Dendritic cell treated with granulocyte-macrophage colony-stimulating factor and Interleukin-4, amounts not matched to agents 40 ng/mL and 50 ng/mL, for 4 days (primary cell): ENCODE measurements at regions of chr1 and their contacts with region 1.

Region 1: DNA sequence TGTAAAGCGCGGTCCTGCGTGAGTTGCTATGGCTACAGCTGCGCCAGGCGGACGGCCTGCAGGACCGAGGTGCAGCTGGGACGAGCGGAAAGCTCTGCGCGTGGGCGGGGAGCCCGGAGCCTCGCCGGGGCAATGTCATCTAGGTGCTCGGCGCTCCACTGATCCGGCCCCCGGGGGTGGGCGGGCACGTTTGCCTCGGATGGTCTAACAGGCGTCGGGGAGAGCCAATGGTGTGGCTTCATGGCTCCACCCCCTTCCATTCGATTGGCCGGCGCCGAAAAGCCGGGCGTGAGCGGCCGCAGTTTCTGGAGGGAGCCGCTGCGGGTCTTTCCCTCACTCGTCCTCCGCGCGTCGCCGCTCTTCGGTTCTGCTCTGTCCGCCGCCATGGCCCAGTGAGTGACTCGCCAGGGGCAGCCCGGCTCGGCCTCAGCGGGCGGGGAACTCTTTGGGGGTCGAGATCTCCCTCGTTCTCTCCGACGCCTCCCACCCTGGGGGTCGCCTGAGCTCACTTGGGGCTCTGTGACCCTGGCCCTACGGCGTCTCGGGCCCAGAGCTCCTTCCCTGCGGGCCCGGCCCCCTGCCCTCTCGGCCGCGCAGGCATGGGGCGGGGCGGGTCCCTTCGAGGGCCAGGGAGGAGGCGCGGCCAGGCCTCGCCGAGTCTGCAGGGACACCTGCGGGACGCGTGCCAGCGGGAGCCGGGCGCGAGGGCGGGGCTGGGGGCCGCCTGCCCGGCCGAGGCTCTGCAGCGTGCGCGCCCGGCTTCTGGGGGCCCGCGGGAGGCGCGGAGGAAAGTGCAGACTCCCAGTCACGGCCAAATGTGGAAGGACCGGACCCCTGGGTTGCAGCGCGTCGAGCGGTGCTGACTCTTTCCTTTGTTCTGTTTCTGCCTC is at the start of gene PGD:
- H3K4me3 Mint-ChIP-seq: peak within 1 kb of the TSS; percentile 84
- H3K27ac Mint-ChIP-seq: peak within 1 kb of the TSS; percentile 89
- H3K4me1 Mint-ChIP-seq: peaks cover 41% of the 10 kb centered on the region
- H3K27me3 Mint-ChIP-seq: no peaks in the 10 kb centered on the region

Region 2: DNA sequence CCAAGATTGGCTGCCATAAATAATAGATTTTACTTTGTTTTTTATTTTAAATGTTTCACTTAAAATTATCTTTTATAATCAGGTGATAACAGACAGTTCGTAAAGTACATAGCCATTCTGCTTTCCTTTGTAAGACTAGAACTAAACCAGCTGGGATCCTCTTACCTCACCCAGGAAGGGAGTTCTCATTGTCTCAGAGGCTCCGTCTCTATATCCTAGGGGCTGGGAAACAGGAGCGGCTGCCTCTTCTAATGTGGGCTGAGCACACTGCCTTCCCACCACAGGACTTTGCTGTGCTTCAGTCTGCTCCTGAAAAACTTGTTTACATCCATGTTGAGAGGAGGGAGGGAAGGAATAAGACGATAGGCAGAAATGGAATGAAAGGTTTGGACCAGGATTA is 45.7 kb before region 1 on chr1:
- intact Hi-C with region 1: no loop called
- H3K4me3 Mint-ChIP-seq: no peak overlapping the region
- H3K27ac Mint-ChIP-seq: no peak overlapping the region
- H3K4me1 Mint-ChIP-seq: no peaks in the 10 kb centered on the region
- H3K27me3 Mint-ChIP-seq: no peaks in the 10 kb centered on the region

Region 3: DNA sequence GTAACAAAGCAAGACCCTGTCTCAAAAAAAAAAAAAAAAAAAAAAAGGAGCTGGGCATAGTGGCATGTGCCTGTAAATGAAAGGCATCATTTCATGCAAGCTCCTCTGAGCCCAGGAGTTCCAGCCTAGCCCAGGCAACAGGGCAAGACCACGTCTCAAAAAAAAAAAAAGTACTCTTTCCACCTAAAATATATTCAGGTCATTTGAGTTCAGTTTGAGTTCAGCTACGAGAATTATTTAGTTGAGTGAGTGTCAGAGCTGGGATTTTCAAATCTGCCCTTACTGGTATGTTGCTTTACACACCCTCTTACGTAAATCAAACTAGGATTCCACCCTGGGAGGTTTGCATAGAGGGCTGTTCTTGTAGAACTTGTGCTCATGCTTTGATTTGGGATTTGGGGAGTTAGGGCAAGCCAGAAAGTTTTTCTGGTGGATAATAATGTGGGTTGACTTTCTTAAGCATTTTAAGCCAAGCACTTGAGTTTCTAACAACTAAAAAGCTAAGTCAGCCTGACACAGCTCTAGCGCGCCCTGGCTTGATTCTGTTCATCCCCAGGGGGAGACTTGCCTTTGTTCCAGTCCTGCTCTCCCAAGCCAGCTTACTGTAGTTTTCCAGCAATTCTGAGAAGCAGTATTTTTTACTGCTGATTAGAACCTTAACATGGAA is 11.4 kb before region 1 on chr1:
- intact Hi-C with region 1: loop called (anchors 1 kb)
- H3K4me3 Mint-ChIP-seq: peak overlapping the region; percentile 51
- H3K27ac Mint-ChIP-seq: peak overlapping the region; percentile 90
- H3K4me1 Mint-ChIP-seq: peaks cover 41% of the 10 kb centered on the region
- H3K27me3 Mint-ChIP-seq: no peaks in the 10 kb centered on the region

Region 4: DNA sequence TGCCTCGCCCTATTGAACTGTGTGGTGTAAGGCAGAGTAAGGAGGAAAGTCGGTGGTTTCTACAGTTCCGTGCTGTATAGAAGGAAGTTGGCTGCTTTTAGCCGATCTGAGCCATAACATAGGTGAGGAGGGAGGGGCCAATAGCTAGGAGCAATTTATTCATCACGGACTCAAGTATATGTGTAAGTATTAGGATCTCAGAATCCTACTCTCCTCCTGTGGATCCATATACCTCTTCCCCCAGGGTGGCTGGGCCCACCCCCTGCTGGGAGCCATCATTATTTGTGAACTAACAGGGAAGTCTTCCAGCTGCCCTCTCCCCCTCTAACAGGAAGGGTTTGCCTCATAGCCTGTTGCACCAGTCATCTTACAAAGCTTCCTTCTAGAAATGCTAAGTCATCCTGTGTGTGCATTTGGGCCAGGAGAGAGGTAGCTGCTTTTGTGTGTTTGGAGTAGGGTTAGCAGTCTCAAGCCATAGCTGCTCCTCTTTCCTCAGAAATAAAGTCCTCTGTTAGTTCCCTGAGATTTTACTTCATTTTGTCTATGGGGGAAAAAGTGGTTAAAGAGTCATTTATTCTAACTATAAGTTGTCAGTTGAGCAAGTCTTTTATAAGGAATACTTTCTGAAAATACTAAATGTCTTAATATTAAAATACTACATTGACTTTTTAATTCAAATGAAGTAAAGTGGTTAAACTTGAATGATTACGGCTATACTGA is 16.4 kb after region 1 on chr1:
- intact Hi-C with region 1: loop called (anchors 2 kb)
- H3K4me3 Mint-ChIP-seq: peak overlapping the region; percentile 50
- H3K27ac Mint-ChIP-seq: peak overlapping the region; percentile 90
- H3K4me1 Mint-ChIP-seq: peaks cover 52% of the 10 kb centered on the region
- H3K27me3 Mint-ChIP-seq: no peaks in the 10 kb centered on the region